AG04450 (cell line): ENCODE measurements at regions of chr2 and their contacts with region 1.

Region 1: GRCh38 chr2:187499941-187500532 is 52.0 kb upstream of the CALCRL start:
- DNase-seq: peak; percentile 29
- H3K4me3 ChIP-seq: no peak overlapping the region
- H3K27ac ChIP-seq: no peak overlapping the region
- H3K27me3 ChIP-seq: no peaks in the 10 kb centered on the region
- CTCF ChIP-seq: peak; percentile 90

Region 2: GRCh38 chr2:187174582-187174981 is 325.5 kb before region 1 on chr2:
- CTCF ChIA-PET with region 1: no interaction called
- POLR2A ChIA-PET with region 1: no interaction called
- DNase-seq: no peak
- H3K4me3 ChIP-seq: no peak overlapping the region
- H3K27ac ChIP-seq: no peak overlapping the region
- H3K27me3 ChIP-seq: no peaks in the 10 kb centered on the region
- CTCF ChIP-seq: peak; percentile 52

Region 3: DNA sequence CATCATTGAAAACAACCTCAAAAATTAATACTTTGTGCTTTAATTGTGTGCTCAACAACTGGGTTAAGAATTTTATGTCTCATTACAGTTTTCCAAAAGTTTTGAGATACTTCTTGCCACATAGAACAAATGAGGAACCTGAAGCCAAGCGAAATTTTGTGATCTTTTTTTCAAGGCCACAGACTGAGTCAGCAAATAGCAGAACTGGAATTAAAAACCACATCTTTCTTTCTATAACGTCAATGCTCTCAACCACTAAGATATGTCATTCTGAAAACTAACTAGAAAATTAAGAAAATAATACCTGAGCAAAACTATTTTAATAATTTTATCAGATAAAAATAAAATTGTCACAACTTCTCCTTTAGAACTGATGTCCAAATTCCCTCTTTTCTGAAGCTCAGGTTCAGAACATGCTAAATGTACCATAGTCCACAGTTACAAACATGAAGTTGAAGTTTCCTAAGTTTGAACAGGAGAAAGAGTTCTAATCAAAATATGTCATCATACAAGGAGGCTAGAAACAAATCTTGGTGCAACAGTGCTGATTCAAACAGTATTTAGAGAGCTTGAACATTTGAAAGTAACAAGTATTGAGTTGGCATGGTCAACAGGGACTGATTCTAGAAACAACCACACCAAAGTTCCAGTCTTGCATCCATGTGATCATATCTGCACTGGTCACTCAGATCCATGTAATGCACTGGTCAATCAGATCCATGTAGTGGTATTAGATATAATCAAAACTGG is 24.4 kb before region 1 on chr2:
- CTCF ChIA-PET with region 1: interaction called, 11 read pairs
- POLR2A ChIA-PET with region 1: no interaction called
- DNase-seq: no peak
- H3K4me3 ChIP-seq: no peak overlapping the region
- H3K27ac ChIP-seq: no peak overlapping the region
- H3K27me3 ChIP-seq: no peaks in the 10 kb centered on the region
- CTCF ChIP-seq: no peak

Region 4: GRCh38 chr2:187527262-187527661 is 27.2 kb after region 1 on chr2:
- CTCF ChIA-PET with region 1: interaction called, 24 read pairs
- POLR2A ChIA-PET with region 1: no interaction called
- DNase-seq: peak; percentile 13
- H3K4me3 ChIP-seq: no peak overlapping the region
- H3K27ac ChIP-seq: no peak overlapping the region
- H3K27me3 ChIP-seq: no peaks in the 10 kb centered on the region
- CTCF ChIP-seq: no peak

Region 5: GRCh38 chr2:187554011-187554703 is 54.1 kb after region 1 on chr2 and contains the start of gene TFPI:
- CTCF ChIA-PET with region 1: interaction called, 32 read pairs
- POLR2A ChIA-PET with region 1: no interaction called
- DNase-seq: no peak
- H3K4me3 ChIP-seq: peak within 1 kb of the TSS; percentile 75
- H3K27ac ChIP-seq: peak within 1 kb of the TSS; percentile 58
- H3K27me3 ChIP-seq: no peaks in the 10 kb centered on the region
- CTCF ChIP-seq: no peak
- polyA plus RNA-seq, gene TFPI: 73.2 and 91.2 TPM in 2 replicates

Region 6: DNA sequence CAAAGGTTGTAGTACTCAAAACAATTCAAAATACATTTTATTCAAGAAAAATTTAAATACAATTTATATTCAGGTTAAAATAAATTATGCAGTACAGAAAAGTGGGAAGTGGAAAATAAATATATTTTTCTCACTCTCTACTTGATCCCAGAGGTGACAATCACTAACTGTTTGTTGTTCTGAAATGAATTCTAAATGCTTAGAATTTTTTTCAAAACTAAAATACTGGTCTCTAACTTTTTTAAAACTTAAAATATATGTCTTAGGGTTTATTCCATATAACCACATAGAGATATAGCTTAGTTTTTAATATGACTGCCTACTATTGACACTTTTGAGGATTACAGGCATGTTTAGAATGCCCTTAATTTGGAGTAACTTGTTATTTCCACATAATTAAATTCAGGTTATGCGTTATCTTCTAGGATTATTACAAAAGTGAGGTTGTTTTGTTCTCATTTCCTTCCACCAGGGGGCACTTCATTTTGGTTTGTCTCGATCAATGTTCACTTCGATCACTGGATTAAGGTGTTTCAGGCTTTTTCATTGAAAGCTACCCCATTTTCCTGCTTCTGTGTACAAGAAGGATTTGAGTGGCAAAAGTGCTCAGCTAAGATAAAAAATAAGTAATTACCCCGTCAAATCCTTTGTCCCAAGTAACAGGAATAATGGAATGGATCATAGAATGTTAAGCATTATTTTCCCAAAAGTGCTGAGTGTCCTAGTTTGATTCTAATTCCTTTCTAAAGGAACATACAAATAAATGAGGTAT is 81.3 kb after region 1 on chr2:
- CTCF ChIA-PET with region 1: interaction called, 792 read pairs
- POLR2A ChIA-PET with region 1: no interaction called
- DNase-seq: no peak
- H3K4me3 ChIP-seq: no peak overlapping the region; the same call in 1 of the 2 replicates
- H3K27ac ChIP-seq: no peak overlapping the region
- H3K27me3 ChIP-seq: no peaks in the 10 kb centered on the region
- CTCF ChIP-seq: peak; percentile 70

Region 7: DNA sequence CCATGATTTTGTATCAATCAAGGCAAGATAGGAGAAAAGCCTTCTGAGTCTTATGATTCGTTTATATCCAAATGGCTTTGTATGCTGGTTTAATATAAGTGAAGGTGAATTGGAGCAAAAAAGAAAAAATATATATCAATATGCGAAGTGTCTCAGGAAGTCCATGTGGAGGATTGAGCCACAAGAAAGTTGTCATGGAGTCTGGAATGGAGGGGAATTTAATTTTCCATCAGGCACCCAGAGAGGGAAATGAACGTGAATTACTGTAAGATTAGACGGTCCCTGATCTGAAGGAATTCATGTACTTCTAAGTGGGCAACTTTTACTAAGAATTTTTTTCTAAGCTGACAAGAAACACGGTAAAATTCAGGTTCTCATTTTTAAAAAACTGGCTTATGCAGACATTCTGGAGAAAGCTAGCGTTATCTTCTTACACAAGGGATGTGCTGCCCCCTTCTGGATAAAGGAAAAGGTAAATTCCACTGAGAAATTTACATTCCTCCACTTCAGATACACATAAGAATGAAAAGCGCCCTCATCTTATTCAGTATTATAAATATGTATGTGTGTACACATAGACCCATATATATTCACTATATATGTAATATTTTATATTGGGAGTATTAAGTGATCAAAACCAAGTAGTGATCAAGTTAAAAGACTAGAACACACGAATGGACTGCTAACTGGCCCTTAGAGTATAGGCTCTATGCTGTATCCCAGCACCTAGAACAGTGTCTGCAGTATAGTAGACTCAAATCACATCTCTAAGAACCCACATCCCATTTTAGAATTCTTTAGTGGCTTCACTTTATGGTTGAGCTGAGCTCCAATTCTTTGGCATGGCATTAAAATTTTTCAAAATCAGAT is 343.2 kb after region 1 on chr2:
- CTCF ChIA-PET with region 1: interaction called, 77 read pairs
- POLR2A ChIA-PET with region 1: no interaction called
- DNase-seq: peak; percentile 55
- H3K4me3 ChIP-seq: no peak overlapping the region
- H3K27ac ChIP-seq: no peak overlapping the region
- H3K27me3 ChIP-seq: no peaks in the 10 kb centered on the region
- CTCF ChIP-seq: peak; percentile 63